Panc1 (cell line): ENCODE measurements at regions of chr6 and their contacts with region 1.

Region 1: DNA sequence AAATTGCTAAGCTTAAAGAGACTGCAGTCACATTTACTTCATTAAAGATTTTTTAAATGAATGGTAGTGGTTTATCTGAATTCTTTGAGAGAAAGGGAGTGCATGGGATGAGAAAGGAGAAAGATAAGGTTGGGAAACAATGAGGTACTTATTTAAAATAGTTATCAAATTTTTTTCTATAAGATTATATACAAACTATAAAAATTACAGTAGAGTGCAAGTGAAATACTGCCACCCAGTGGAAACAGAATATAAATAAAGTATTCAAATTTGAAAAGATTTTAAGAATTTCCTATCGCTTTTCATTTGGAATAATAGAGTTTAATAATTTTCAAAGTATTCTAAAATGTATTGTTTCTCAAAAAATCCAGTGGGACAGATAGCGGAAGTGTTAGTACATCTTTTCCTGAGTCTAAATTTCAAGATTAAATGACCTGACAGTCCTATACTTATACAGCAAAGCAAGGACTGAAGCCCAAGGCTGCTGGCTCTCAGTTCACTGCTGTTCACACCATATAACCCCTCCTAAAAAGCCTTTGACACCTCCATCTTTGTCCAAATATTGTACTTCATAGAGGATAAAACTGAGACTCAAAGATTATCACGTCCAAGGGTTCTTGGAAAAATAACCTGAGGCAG is 31.1 kb downstream of the EPM2A start:
- DNase-seq: no peak
- ATAC-seq: no peak
- H3K4me3 ChIP-seq: no peak overlapping the region
- H3K27ac ChIP-seq: no peak overlapping the region
- H3K4me1 ChIP-seq: no peaks in the 10 kb centered on the region
- H3K27me3 ChIP-seq: no peaks in the 10 kb centered on the region
- CTCF ChIP-seq: peak; percentile 56; the same call in 1 of the 2 replicates

Region 2: DNA sequence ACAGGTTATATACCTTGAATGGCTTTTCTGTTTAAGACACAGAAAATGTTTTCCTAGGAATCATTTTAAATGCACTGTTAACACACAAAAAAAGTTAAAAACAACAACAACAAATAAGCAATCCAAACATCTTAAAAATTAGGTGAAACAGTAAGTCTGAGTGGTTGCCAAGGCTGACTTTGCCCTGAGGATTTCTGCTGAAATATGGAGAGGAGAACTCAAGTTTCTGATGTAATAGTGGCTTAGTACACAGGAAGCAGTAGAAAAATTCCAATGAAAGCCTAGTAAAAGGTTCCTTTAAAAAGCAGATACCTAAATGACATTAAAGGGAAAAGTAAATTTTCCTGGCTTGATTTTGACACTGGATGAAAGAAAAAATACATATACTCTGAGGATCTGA is 153.1 kb before region 1 on chr6:
- CTCF ChIA-PET with region 1: no interaction called
- POLR2A ChIA-PET with region 1: no interaction called
- in situ Hi-C with region 1: no loop called
- intact Hi-C with region 1: loop called (anchors 5 kb)
- DNase-seq: no peak
- ATAC-seq: no peak
- H3K4me3 ChIP-seq: no peak overlapping the region
- H3K27ac ChIP-seq: no peak overlapping the region
- H3K4me1 ChIP-seq: no peaks in the 10 kb centered on the region
- H3K27me3 ChIP-seq: no peaks in the 10 kb centered on the region
- CTCF ChIP-seq: no peak

Region 3: GRCh38 chr6:145600299-145600698 is 104.0 kb before region 1 on chr6:
- CTCF ChIA-PET with region 1: interaction called, 20 read pairs
- POLR2A ChIA-PET with region 1: no interaction called
- in situ Hi-C with region 1: no loop called
- intact Hi-C with region 1: no loop called
- DNase-seq: no peak
- ATAC-seq: no peak
- H3K4me3 ChIP-seq: no peak overlapping the region
- H3K27ac ChIP-seq: no peak overlapping the region
- H3K4me1 ChIP-seq: no peaks in the 10 kb centered on the region
- H3K27me3 ChIP-seq: no peaks in the 10 kb centered on the region
- CTCF ChIP-seq: no peak

Region 4: GRCh38 chr6:145963216-145964068 is 259.2 kb after region 1 on chr6:
- CTCF ChIA-PET with region 1: no interaction called
- POLR2A ChIA-PET with region 1: no interaction called
- in situ Hi-C with region 1: no loop called
- intact Hi-C with region 1: no loop called
- DNase-seq: no peak
- ATAC-seq: peak; percentile 51
- H3K4me3 ChIP-seq: peak overlapping the region; percentile 92 to 95
- H3K27ac ChIP-seq: peak overlapping the region; percentile 92
- H3K4me1 ChIP-seq: peaks cover 11% of the 10 kb centered on the region
- H3K27me3 ChIP-seq: no peaks in the 10 kb centered on the region
- CTCF ChIP-seq: no peak

Region 5: DNA sequence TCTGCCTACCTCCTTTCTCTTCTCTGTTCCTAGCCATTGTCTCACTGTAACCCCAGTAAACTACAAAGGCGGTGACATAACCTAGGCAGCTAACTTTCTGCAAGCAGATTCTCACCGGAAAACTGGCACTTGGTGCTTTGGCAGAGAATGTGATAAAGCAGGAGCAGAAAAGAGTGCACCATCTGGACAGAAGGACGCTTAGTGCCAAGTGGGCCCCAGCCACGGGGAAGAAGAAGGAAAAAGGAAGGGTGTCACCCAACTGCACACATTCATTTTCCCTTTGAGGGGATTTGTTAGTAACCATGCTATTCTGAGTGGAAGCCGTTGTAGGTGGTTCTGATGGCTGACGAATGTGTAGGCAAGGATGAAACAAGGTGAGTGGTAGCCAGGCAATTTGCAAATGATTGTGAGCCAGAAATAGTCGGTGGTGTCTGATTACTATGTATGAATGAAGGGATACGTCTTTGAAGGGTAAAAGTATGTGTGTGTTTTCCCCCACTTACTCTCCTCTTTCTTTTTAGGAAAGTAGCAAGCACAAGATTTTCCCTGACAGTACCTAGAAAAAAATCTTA is 1351.6 kb after region 1 on chr6:
- CTCF ChIA-PET with region 1: no interaction called
- POLR2A ChIA-PET with region 1: no interaction called
- in situ Hi-C with region 1: no loop called
- intact Hi-C with region 1: no loop called
- DNase-seq: no peak
- ATAC-seq: no peak
- H3K4me3 ChIP-seq: no peak overlapping the region
- H3K27ac ChIP-seq: no peak overlapping the region
- H3K4me1 ChIP-seq: peaks cover 2% of the 10 kb centered on the region; the same call in 1 of the 2 replicates
- H3K27me3 ChIP-seq: no peaks in the 10 kb centered on the region
- CTCF ChIP-seq: no peak